ENCODE measurements at regions of chr22 and their contacts with region 1.

Region 1: GRCh38 chr22:39985383-39986035 is 9.2 kb upstream of the FAM83F start:
- DNase-seq: no peak
- ATAC-seq: no peak

Region 2: DNA sequence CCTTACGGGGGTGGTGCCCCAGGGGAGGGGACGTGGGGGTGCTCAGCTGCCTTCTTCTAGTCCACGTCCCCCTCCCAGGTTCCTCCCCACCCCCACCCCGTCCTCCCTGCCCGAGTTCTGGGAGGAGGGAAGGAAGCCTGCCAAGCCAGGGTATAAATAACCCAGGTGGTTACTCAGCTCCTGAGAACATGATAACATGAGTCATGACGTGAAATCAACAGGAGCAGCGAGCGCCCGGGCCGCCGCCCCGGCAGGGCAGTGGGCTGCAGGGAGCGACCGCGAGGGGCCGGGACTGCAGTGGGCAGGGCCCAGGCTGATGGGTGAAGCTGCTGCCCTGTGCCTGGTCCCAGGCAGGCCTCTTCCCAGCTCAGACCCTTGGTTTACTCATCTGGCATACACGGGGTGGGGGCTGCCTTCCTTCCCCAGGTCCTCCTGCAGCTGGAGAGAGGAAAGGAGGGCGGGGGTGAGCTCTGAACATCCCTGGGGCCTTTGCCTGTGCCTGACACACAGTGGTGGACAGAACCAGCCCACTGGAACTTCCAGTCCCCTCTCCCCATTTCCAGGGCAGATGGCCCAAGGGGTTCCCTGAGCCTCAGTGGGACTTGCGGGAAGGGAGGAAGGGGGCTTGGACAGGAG is 732.0 kb before region 1 on chr22:
- intact Hi-C with region 1: loop called (anchors 5 kb)
- DNase-seq: no peak
- ATAC-seq: peak; percentile 59

Region 3: DNA sequence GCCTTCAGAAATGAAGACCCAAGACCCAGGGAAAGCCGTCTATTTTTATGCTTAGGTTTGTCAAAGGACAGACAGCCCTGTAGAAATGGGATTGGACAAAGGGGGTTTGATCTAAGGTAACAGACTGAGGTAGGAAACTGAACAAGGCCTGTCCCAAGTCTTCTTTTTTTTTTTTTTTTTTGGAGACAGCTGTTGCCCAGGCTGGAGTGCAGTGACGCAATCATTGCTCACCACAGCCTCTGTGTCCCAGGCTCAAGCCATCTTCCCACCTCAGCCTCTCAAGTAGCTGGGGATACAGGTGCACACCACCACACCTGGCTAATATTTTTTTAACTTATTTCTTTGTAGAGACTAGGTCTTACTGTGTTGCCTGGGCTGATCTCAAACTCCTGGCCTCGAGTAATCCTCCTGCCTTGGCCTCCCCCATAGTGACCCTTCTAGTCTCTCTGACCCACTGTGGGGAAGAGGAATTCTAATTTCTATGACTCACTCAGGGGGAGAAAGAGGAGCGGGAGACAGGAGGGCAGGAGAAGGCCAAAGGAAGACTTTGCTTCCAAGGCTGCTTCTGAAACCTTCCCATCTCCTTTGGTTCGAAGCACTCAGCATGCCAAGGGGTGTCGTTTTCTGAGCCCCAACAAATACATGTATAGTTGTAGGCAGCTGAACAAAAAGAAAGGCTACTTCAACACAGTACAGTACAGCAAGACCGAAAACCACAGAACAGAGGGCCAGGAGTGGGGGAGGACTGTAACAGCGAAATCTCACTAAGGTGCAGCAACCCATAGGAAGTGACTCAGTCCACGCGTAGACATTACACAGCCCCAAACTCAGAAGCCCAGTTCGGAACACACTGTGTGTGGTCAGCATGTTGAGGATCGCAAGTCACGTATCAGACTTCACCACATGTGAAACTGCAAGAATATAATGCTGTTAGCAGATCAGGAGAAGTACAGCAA is 24.4 kb before region 1 on chr22:
- intact Hi-C with region 1: no loop called
- DNase-seq: no peak
- ATAC-seq: peak; percentile 53

Region 4: GRCh38 chr22:39997939-39998338 is 12.4 kb after region 1 on chr22:
- intact Hi-C with region 1: no loop called
- DNase-seq: no peak
- ATAC-seq: peak; percentile 26